ENCODE measurements at regions of chr1 and their contacts with region 1.

Region 1: DNA sequence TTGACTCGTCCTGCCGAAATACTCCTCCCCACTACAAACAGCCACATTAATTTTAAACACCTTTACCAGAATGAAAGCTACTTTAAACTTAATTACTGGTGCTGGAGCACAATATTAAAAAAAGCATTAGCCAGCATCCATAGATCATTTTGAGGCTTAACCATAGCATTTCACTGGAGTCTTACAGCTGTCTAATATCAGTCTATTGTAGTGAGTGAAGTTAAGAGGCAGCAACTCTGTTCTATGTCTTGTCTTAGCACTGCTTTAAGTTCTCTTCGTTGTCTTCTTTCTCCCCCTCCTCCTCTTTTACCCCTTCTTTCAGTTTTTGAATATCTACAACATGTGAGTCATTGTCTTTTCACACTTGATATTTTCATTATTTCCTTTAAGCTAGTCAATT is 49.3 kb downstream of the ADGRL2 start:
- DNase-seq: no peak
- H3K4me3 ChIP-seq: no peak overlapping the region
- H3K27ac ChIP-seq: no peak overlapping the region
- H3K4me1 ChIP-seq: no peaks in the 10 kb centered on the region
- H3K27me3 ChIP-seq: no peaks in the 10 kb centered on the region
- CTCF ChIP-seq: no peak
- POLR2A ChIP-seq: no peak

Region 2: GRCh38 chr1:83574791-83575190 is 1724.8 kb after region 1 on chr1:
- intact Hi-C with region 1: loop called (anchors 5 kb)
- DNase-seq: no peak
- H3K4me3 ChIP-seq: no peak overlapping the region
- H3K27ac ChIP-seq: no peak overlapping the region
- H3K4me1 ChIP-seq: no peaks in the 10 kb centered on the region
- H3K27me3 ChIP-seq: no peaks in the 10 kb centered on the region
- CTCF ChIP-seq: no peak
- POLR2A ChIP-seq: no peak